ENCODE measurements at regions of chr4 and their contacts with region 1.

Region 1: GRCh38 chr4:94406668-94407437 is 44.9 kb upstream of the PDLIM5 start:
- DNase-seq: peak; percentile 25
- ATAC-seq: peak; percentile 87
- H3K4me3 ChIP-seq: no peak overlapping the region
- H3K27ac ChIP-seq: no peak overlapping the region
- H3K4me1 ChIP-seq: no peaks in the 10 kb centered on the region
- H3K27me3 ChIP-seq: no peaks in the 10 kb centered on the region
- CTCF ChIP-seq: peak; percentile 83 to 87 (median 86)
- EP300 ChIP-seq: no peak
- POLR2A ChIP-seq: no peak
- RAD21 ChIP-seq: peak; percentile 92

Region 2: GRCh38 chr4:94419956-94420355 is 13.1 kb after region 1 on chr4:
- CTCF ChIA-PET with region 1: interaction called, 18 read pairs
- POLR2A ChIA-PET with region 1: no interaction called
- RAD21 ChIA-PET with region 1: interaction called, 5 read pairs
- SMC1A ChIA-PET with region 1: interaction called, 14 read pairs
- in situ Hi-C with region 1: no loop called
- intact Hi-C with region 1: no loop called
- DNase-seq: no peak
- ATAC-seq: no peak
- H3K4me3 ChIP-seq: no peak overlapping the region
- H3K27ac ChIP-seq: no peak overlapping the region
- H3K4me1 ChIP-seq: no peaks in the 10 kb centered on the region
- H3K27me3 ChIP-seq: no peaks in the 10 kb centered on the region; a peak in 1 of 4 replicates
- CTCF ChIP-seq: no peak
- EP300 ChIP-seq: no peak
- POLR2A ChIP-seq: no peak
- RAD21 ChIP-seq: no peak

Region 3: GRCh38 chr4:94451695-94452475 is 45.0 kb after region 1 on chr4 and contains the start of gene PDLIM5:
- CTCF ChIA-PET with region 1: interaction called, 10 read pairs
- POLR2A ChIA-PET with region 1: interaction called, 3 read pairs
- RAD21 ChIA-PET with region 1: interaction called, 8 read pairs
- SMC1A ChIA-PET with region 1: interaction called, 11 read pairs
- in situ Hi-C with region 1: no loop called
- intact Hi-C with region 1: no loop called
- DNase-seq: peak; percentile 66
- ATAC-seq: peak; percentile 91
- H3K4me3 ChIP-seq: peak within 1 kb of the TSS; percentile 87
- H3K27ac ChIP-seq: peak within 1 kb of the TSS; percentile 59
- H3K4me1 ChIP-seq: peaks cover 5% of the 10 kb centered on the region; the same call in 1 of the 2 replicates
- H3K27me3 ChIP-seq: no peaks in the 10 kb centered on the region
- CTCF ChIP-seq: no peak
- EP300 ChIP-seq: 0 out of 4 replicates have a peak, but pooled peaks of 1 of the 2 experiments have one; percentile 11
- POLR2A ChIP-seq: peak; percentile 99
- RAD21 ChIP-seq: no peak
- polyA plus RNA-seq, gene PDLIM5: 10.0 to 15.2 TPM

Region 4: GRCh38 chr4:94583914-94584641 is 177.2 kb after region 1 on chr4:
- CTCF ChIA-PET with region 1: interaction called, 14 read pairs
- POLR2A ChIA-PET with region 1: no interaction called
- RAD21 ChIA-PET with region 1: interaction called, 7 read pairs
- SMC1A ChIA-PET with region 1: interaction called, 13 read pairs
- in situ Hi-C with region 1: no loop called
- intact Hi-C with region 1: no loop called
- DNase-seq: no peak
- ATAC-seq: peak; percentile 58
- H3K4me3 ChIP-seq: no peak overlapping the region
- H3K27ac ChIP-seq: no peak overlapping the region
- H3K4me1 ChIP-seq: no peaks in the 10 kb centered on the region
- H3K27me3 ChIP-seq: no peaks in the 10 kb centered on the region
- CTCF ChIP-seq: no peak
- EP300 ChIP-seq: no peak
- POLR2A ChIP-seq: no peak
- RAD21 ChIP-seq: no peak

Region 5: DNA sequence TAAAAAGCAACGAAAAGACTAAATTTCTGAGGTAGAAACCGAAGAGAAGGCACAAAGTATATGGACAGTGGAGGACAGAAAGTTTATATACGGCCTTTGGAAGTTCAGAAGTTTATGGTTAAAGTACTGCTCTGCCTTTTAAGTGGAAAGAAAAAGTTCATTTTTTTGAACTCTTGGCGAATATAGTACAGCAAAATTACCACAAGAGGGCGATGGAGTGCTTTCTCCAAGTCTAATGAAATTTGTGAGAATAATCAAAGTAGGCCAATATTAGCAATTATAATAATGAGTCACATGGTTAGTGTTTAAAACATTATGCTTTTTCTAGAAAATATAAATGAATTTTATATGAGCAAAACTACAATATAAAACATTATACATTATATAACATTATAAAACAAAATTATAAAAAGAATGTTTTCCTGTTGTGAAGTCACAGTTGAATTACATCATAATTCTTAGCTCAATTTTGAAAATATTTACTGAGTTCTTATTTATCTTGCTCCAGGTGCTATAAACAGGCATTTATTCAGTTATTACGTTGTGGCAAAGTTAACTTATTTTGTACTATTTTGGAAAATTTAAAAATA is 214.7 kb after region 1 on chr4:
- CTCF ChIA-PET with region 1: interaction called, 28 read pairs
- POLR2A ChIA-PET with region 1: no interaction called
- RAD21 ChIA-PET with region 1: interaction called, 4 read pairs
- SMC1A ChIA-PET with region 1: interaction called, 10 read pairs
- in situ Hi-C with region 1: no loop called
- intact Hi-C with region 1: no loop called
- DNase-seq: no peak
- ATAC-seq: peak; percentile 75
- H3K4me3 ChIP-seq: no peak overlapping the region
- H3K27ac ChIP-seq: no peak overlapping the region
- H3K4me1 ChIP-seq: no peaks in the 10 kb centered on the region
- H3K27me3 ChIP-seq: no peaks in the 10 kb centered on the region
- CTCF ChIP-seq: peak; percentile 58 to 68 (median 68)
- EP300 ChIP-seq: no peak
- POLR2A ChIP-seq: no peak
- RAD21 ChIP-seq: peak; percentile 74